ENCODE measurements at regions of chr19 and their contacts with region 1.

Region 1: DNA sequence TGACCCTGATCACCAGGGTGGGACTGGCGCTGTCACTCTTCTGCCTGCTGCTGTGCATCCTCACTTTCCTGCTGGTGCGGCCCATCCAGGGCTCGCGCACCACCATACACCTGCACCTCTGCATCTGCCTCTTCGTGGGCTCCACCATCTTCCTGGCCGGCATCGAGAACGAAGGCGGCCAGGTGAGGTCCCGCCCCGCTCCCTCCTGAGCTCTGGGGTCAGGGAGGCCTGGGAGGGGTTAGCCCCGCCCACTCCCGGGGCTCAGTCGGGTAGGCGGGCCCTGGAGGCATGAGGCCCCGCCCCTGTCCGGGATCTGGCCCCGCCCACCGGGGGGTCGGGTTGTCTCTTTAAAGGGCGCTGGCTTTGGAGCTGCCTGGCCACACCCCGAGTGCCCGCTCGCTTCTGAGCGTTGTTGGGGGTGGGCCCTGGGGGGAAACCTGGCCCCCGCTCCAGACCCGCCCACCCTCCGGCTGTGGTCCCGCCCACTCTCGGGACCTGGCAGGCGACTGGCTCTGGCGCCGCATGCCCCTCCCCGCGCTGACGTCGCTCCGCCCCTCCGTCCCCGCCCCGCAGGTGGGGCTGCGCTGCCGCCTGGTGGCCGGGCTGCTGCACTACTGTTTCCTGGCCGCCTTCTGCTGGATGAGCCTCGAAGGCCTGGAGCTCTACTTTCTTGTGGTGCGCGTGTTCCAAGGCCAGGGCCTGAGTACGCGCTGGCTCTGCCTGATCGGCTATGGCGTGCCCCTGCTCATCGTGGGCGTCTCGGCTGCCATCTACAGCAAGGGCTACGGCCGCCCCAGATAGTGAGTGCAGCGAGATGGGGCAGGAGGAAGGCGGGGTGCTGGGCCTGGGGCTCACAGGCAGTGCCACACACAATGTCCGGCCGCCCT is 13.1 kb downstream of the DDX39A start:
- DNase-seq: peak; percentile 86 to 91 (median 88)
- H3K4me3 ChIP-seq: no peak overlapping the region
- H3K4me3 Mint-ChIP-seq: peak overlapping the region in 3 of 7 donors; percentile 19 to 83 (median 77)
- H3K27ac ChIP-seq: no peak overlapping the region
- H3K27ac Mint-ChIP-seq: peak overlapping the region in 7 of 8 donors; percentile 59 to 97 (median 87)
- H3K4me1 ChIP-seq: peaks cover 40% of the 10 kb centered on the region
- H3K4me1 Mint-ChIP-seq: peaks cover 11 to 55% (median 26%) of the 10 kb centered on the region in 3 donors
- H3K27me3 ChIP-seq: no peaks in the 10 kb centered on the region
- H3K27me3 Mint-ChIP-seq: peaks cover 0 to 13% of the 10 kb centered on the region in 2 donors

Region 2: GRCh38 chr19:14366498-14366915 is 39.5 kb before region 1 on chr19:
- CTCF ChIA-PET with region 1: interaction called, 186 read pairs
- POLR2A ChIA-PET with region 1: interaction called, 7 read pairs
- DNase-seq: peak; percentile 76 to 96 (median 92)
- H3K4me3 ChIP-seq: peak overlapping the region; percentile 46
- H3K4me3 Mint-ChIP-seq: peak overlapping the region; percentile 47 to 80 (median 70)
- H3K27ac ChIP-seq: peak overlapping the region; percentile 68
- H3K27ac Mint-ChIP-seq: peak overlapping the region; percentile 85 to 100 (median 100)
- H3K4me1 ChIP-seq: peaks cover 88% of the 10 kb centered on the region
- H3K4me1 Mint-ChIP-seq: peaks cover 60 to 79% (median 73%) of the 10 kb centered on the region in 3 donors
- H3K27me3 ChIP-seq: no peaks in the 10 kb centered on the region
- H3K27me3 Mint-ChIP-seq: peaks cover 0 to 13% of the 10 kb centered on the region in 2 donors

Region 3: DNA sequence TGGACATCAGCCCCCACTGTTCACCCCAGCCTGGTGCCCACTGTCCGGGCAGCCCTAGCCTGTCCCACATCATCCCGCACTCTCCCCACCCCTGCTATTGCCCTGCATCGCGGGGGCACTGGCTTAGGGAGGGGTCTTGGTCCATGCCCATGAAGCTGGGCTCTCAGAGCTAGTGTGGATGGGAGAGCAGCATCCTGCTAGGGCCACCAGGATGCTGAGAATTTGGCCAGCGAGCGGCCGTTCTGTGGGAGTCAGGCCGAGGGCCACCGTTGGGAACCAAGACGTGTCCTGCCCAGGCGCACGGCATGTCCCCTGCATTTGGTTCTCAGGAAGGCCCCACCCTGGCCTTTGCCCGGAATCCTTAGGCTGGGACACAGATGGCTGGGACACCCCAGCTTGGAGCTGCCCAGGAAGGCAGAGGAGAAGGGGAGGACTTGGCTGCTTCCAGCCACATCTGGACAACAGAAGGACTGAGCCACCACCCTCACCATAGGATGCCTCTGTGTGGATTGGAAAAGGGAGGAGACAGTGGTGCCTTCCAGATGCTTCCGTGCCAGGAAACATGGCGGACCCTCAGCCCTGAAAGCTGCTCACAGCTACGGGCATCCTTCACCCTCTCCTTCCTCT is 10.2 kb before region 1 on chr19:
- CTCF ChIA-PET with region 1: interaction called, 14 read pairs
- POLR2A ChIA-PET with region 1: interaction called, 5 read pairs
- DNase-seq: no peak
- H3K4me3 ChIP-seq: no peak overlapping the region
- H3K4me3 Mint-ChIP-seq: peak overlapping the region in 2 of 7 donors; percentile 63 to 70
- H3K27ac ChIP-seq: no peak overlapping the region
- H3K27ac Mint-ChIP-seq: peak overlapping the region in 4 of 8 donors; percentile 32 to 96 (median 64)
- H3K4me1 ChIP-seq: peaks cover under 1% of the 10 kb centered on the region
- H3K4me1 Mint-ChIP-seq: peaks cover 0 to 17% (median 10%) of the 10 kb centered on the region in 3 donors
- H3K27me3 ChIP-seq: no peaks in the 10 kb centered on the region
- H3K27me3 Mint-ChIP-seq: peaks cover 0 to 8% of the 10 kb centered on the region in 2 donors

Region 4: DNA sequence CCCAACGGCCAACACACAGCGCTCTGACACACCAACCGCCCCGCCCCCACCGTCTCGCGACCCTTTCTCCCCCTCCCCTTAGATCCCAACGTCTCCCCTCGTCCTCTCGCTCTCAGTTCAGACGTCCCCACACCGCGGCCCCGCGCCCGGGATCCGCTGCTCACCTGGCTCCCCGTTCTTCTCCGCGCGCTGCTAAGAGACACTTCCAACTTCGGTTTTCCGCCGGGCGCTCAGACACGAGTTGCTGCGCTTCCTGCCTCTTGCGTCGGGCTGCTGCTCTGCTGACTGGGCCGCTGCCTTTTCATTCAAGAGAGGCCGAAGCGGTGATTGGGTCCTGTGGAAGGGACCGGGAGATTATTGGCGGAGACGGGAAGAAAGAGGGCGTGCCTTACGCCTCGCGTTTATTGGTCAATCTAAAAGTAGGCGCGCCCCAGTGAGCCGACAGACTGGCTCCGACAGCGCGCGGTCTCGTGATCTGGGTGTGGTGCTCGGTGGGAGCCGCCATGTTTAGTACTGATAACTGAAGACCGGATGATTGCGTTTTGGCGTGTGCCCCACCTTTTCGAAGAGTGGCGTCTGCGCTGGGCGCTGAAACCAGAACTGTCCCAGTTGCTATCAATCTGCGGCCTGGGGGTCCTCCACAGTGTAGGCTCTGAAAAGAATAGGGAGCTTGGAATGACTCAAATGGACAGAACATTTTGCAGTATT is 13.3 kb after region 1 on chr19 and contains the start of gene DDX39A:
- CTCF ChIA-PET with region 1: interaction called, 13 read pairs
- POLR2A ChIA-PET with region 1: interaction called, 11 read pairs
- DNase-seq: peak; percentile 95 to 99 (median 97)
- H3K4me3 ChIP-seq: peak within 1 kb of the TSS; percentile 72
- H3K4me3 Mint-ChIP-seq: peak within 1 kb of the TSS; percentile 86 to 97 (median 93)
- H3K27ac ChIP-seq: peak within 1 kb of the TSS; percentile 94
- H3K27ac Mint-ChIP-seq: peak within 1 kb of the TSS; percentile 91 to 98 (median 98)
- H3K4me1 ChIP-seq: peaks cover 39% of the 10 kb centered on the region
- H3K4me1 Mint-ChIP-seq: peaks cover 34 to 49% (median 47%) of the 10 kb centered on the region in 3 donors
- H3K27me3 ChIP-seq: no peaks in the 10 kb centered on the region
- H3K27me3 Mint-ChIP-seq: peaks cover 0 to 9% of the 10 kb centered on the region in 2 donors
- total RNA-seq, gene DDX39A: 298 to 302 TPM

Region 5: DNA sequence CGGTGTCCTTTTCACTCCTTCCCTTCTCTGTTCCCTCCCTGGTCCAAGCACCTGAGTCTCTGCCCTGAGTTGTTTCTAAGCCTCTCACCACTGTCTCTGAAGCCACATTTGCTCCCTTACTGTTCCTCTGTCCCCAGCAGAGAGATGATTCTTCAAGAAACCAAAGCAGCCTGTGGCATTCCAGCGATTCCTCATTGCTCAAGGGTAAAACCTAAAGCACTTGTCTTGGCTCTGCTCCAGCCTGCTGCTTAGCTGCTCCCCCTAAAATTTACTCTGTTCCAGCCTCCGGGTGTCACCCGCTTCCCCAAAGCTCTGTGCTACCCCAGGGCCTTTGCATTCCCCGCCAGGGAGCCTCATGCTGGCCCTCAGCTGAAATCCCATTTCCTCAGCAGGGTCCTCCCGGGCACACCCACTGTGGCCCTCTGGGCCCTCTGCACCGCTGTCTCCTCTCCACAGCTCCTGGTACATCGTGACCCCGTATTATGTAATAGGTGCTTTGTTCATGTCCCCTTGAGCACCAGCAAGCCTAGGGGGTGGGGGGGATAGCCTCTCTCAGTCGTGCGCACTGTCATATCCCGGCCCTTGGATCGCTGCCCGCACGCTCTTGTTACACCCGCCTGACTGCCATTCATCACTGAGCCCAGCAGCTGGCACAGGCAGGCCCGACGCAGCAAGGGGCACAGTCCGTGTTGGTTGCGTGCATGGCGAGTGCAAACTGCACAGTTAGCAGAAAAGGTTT is 139.1 kb after region 1 on chr19:
- CTCF ChIA-PET with region 1: no interaction called
- POLR2A ChIA-PET with region 1: no interaction called
- DNase-seq: no peak
- H3K4me3 ChIP-seq: no peak overlapping the region
- H3K4me3 Mint-ChIP-seq: peak overlapping the region in 1 of 7 donors; percentile 10
- H3K27ac ChIP-seq: no peak overlapping the region
- H3K27ac Mint-ChIP-seq: peak overlapping the region in 4 of 8 donors; percentile 20 to 73 (median 51)
- H3K4me1 ChIP-seq: peaks cover 2% of the 10 kb centered on the region
- H3K4me1 Mint-ChIP-seq: peaks cover 16 to 54% (median 22%) of the 10 kb centered on the region in 3 donors
- H3K27me3 ChIP-seq: no peaks in the 10 kb centered on the region
- H3K27me3 Mint-ChIP-seq: no peaks in the 10 kb centered on the region

Measured in CD8-positive, alpha-beta memory T cell (primary cell).